ENCODE measurements at regions of chr16 and their contacts with region 1.

Region 1: GRCh38 chr16:75471723-75472633 is 7.5 kb upstream of the TMEM170A start:
- DNase-seq: peak; percentile 9
- H3K4me3 ChIP-seq: no peak overlapping the region
- CTCF ChIP-seq: peak; percentile 78

Region 2: GRCh38 chr16:75311383-75311938 is 160.5 kb before region 1 on chr16:
- CTCF ChIA-PET with region 1: no interaction called
- POLR2A ChIA-PET with region 1: no interaction called
- DNase-seq: no peak
- H3K4me3 ChIP-seq: no peak overlapping the region
- CTCF ChIP-seq: no peak

Region 3: GRCh38 chr16:75486676-75487313 is 14.8 kb after region 1 on chr16:
- CTCF ChIA-PET with region 1: interaction called, 22 read pairs
- POLR2A ChIA-PET with region 1: no interaction called
- DNase-seq: no peak
- H3K4me3 ChIP-seq: no peak overlapping the region
- CTCF ChIP-seq: no peak

Region 4: GRCh38 chr16:75495076-75495674 is 23.2 kb after region 1 on chr16 and contains the start of gene CHST6:
- CTCF ChIA-PET with region 1: interaction called, 10 read pairs
- POLR2A ChIA-PET with region 1: no interaction called
- DNase-seq: no peak
- H3K4me3 ChIP-seq: peak within 1 kb of the TSS; percentile 40
- CTCF ChIP-seq: no peak

Region 5: GRCh38 chr16:75555707-75556430 is 83.9 kb after region 1 on chr16 and contains the start of gene TMEM231:
- CTCF ChIA-PET with region 1: interaction called, 52 read pairs
- POLR2A ChIA-PET with region 1: no interaction called
- DNase-seq: peak; percentile 29
- H3K4me3 ChIP-seq: peak within 1 kb of the TSS; percentile 73
- CTCF ChIP-seq: peak; percentile 3

Region 6: GRCh38 chr16:75622761-75623605 is 151.0 kb after region 1 on chr16 and contains the start of gene ADAT1:
- CTCF ChIA-PET with region 1: interaction called, 61 read pairs
- POLR2A ChIA-PET with region 1: no interaction called
- DNase-seq: peak; percentile 87
- H3K4me3 ChIP-seq: peak within 1 kb of the TSS; percentile 86
- CTCF ChIP-seq: no peak

Region 7: GRCh38 chr16:75764154-75764768 is 292.3 kb after region 1 on chr16:
- CTCF ChIA-PET with region 1: interaction called, 47 read pairs
- POLR2A ChIA-PET with region 1: no interaction called
- DNase-seq: peak; percentile 24
- H3K4me3 ChIP-seq: no peak overlapping the region
- CTCF ChIP-seq: peak; percentile 69